GM12878 (cell line): ENCODE measurements at regions of chr6 and their contacts with region 1.

Region 1: GRCh38 chr6:136344420-136344819 is 54.8 kb upstream of the BCLAF1 start:
- DNase-seq: no peak
- ATAC-seq: no peak
- H3K4me3 ChIP-seq: no peak overlapping the region
- H3K27ac ChIP-seq: no peak overlapping the region
- H3K4me1 ChIP-seq: no peaks in the 10 kb centered on the region
- H3K27me3 ChIP-seq: no peaks in the 10 kb centered on the region; a peak in 1 of 4 replicates
- CTCF ChIP-seq: no peak
- EP300 ChIP-seq: no peak
- POLR2A ChIP-seq: no peak
- RAD21 ChIP-seq: no peak

Region 2: DNA sequence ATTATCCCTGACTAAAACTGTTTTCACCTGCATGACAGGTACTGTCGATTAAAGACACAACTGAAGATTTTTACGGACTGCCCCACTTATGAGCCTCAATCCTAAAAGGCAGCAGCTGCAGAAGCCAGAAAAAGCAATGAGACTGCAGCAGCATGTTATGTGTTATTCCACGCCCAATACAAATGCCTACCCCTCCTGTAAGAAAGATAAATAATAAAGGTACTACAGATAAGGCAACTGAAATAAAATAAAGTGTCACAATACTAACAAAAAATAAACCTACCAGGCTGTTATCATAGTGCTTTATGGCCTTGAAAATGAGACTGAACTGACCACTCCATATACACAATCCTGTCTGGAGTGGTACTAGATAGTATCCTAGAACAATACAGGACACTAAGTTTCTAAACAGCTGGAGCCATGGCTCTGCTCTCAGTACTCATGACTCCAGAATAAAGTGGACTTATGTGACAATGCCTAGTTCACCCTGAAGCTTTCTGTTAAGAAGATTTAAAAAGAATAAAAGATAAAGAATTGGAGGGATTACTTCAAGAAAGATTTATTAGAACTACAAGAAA is 64.3 kb before region 1 on chr6:
- CTCF ChIA-PET with region 1: no interaction called
- POLR2A ChIA-PET with region 1: no interaction called
- RAD21 ChIA-PET with region 1: no interaction called
- SMC1A ChIA-PET with region 1: no interaction called
- in situ Hi-C with region 1: no loop called
- intact Hi-C with region 1: no loop called
- DNase-seq: no peak
- ATAC-seq: no peak
- H3K4me3 ChIP-seq: no peak overlapping the region
- H3K27ac ChIP-seq: no peak overlapping the region
- H3K4me1 ChIP-seq: no peaks in the 10 kb centered on the region; the same call in 1 of the 2 replicates
- H3K27me3 ChIP-seq: no peaks in the 10 kb centered on the region
- CTCF ChIP-seq: no peak
- EP300 ChIP-seq: no peak
- POLR2A ChIP-seq: no peak
- RAD21 ChIP-seq: no peak

Region 3: GRCh38 chr6:136547336-136547735 is 202.9 kb after region 1 on chr6:
- CTCF ChIA-PET with region 1: interaction called, 11 read pairs
- POLR2A ChIA-PET with region 1: no interaction called
- RAD21 ChIA-PET with region 1: no interaction called
- SMC1A ChIA-PET with region 1: interaction called, 5 read pairs
- in situ Hi-C with region 1: no loop called
- intact Hi-C with region 1: loop called (anchors 10 kb)
- DNase-seq: no peak
- ATAC-seq: no peak
- H3K4me3 ChIP-seq: no peak overlapping the region
- H3K27ac ChIP-seq: no peak overlapping the region
- H3K4me1 ChIP-seq: peaks cover 9% of the 10 kb centered on the region; the same call in 1 of the 2 replicates
- H3K27me3 ChIP-seq: peaks cover 0 to 7% of the 10 kb centered on the region in 2 experiments; a peak in 3 of 4 replicates
- CTCF ChIP-seq: peak; percentile 16 to 55 (median 30); a peak in 4 of 6 replicates
- EP300 ChIP-seq: no peak
- POLR2A ChIP-seq: no peak
- RAD21 ChIP-seq: peak; percentile 56